ENCODE measurements at regions of chr9 and their contacts with region 1.

Region 1: GRCh38 chr9:105244003-105244733 is at the start of gene SLC44A1:
- DNase-seq: peak; percentile 96
- H3K4me3 Mint-ChIP-seq: peak within 1 kb of the TSS; percentile 83
- H3K27ac Mint-ChIP-seq: peak within 1 kb of the TSS; percentile 79
- H3K4me1 Mint-ChIP-seq: peaks cover 6% of the 10 kb centered on the region
- H3K27me3 Mint-ChIP-seq: peaks cover 27% of the 10 kb centered on the region
- CTCF ChIP-seq: no peak
- total RNA-seq, gene SLC44A1: 15.2 and 15.9 TPM in 2 replicates

Region 2: DNA sequence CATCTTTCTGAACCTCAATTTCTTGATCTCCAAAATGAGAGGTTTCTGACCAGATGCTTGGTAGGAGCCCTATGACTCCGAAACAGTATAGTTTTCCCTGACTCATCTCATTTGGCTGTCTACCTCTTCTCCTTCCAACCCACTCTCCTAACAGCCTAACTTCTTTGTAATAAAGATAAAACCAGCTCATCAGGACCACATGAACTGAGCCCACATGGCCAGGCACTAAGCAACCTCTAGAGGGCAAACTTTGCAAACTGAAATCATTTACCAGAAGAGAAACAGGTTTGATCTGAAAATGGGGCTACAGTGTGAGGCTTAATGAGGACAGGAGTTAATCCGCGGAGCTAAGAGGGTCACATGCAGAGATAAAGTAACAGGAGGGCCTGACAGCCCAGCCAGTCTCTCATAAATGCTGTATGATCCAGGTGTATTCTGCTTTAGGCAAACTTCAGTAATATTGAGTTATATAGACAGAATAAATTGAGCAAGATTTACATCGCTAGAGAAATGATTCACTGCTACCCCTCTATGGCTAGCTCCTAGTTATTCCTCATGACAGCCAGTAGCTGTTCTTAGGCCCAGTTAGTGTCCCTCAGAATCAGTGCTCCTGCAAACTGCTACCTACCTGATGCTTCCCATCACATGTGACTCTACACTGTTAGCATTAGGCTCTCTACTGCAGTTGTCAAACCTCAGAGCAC is 380.8 kb before region 1 on chr9:
- CTCF ChIA-PET with region 1: interaction called, 7 read pairs
- POLR2A ChIA-PET with region 1: interaction called, 5 read pairs
- intact Hi-C with region 1: loop called (anchors 10 kb)
- DNase-seq: peak; percentile 83
- H3K4me3 Mint-ChIP-seq: no peak overlapping the region
- H3K27ac Mint-ChIP-seq: no peak overlapping the region
- H3K4me1 Mint-ChIP-seq: peaks cover 11% of the 10 kb centered on the region
- H3K27me3 Mint-ChIP-seq: no peaks in the 10 kb centered on the region
- CTCF ChIP-seq: peak; percentile 74

Region 3: DNA sequence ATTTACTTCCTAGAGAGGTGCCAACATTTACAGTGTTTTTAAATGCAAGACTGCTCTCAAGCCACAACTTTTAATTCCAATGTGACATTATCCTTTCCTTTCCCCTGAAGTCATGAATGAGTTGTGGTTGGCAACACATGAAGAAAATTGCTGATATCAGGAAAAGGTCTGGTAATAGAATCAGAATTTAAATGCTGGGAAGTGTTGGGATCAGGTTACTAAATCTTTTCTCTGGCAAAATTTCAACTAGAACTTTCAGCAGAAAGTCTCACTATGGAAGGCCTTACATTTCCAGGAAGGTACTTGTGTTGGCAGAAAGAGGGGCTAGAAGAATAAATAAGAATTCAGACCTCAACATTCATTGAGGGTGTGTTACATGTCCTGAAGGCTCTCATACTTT is 10.3 kb before region 1 on chr9:
- CTCF ChIA-PET with region 1: interaction called, 10 read pairs
- POLR2A ChIA-PET with region 1: interaction called, 3 read pairs
- intact Hi-C with region 1: no loop called
- DNase-seq: peak; percentile 43
- H3K4me3 Mint-ChIP-seq: no peak overlapping the region
- H3K27ac Mint-ChIP-seq: no peak overlapping the region
- H3K4me1 Mint-ChIP-seq: peaks cover 5% of the 10 kb centered on the region
- H3K27me3 Mint-ChIP-seq: peaks cover 4% of the 10 kb centered on the region
- CTCF ChIP-seq: no peak

Region 4: GRCh38 chr9:105280691-105281090 is 36.5 kb after region 1 on chr9:
- CTCF ChIA-PET with region 1: interaction called, 8 read pairs
- POLR2A ChIA-PET with region 1: interaction called, 19 read pairs
- intact Hi-C with region 1: no loop called
- DNase-seq: peak; percentile 36
- H3K4me3 Mint-ChIP-seq: no peak overlapping the region
- H3K27ac Mint-ChIP-seq: peak overlapping the region; percentile 33
- H3K4me1 Mint-ChIP-seq: peaks cover 20% of the 10 kb centered on the region
- H3K27me3 Mint-ChIP-seq: no peaks in the 10 kb centered on the region
- CTCF ChIP-seq: no peak

Region 5: DNA sequence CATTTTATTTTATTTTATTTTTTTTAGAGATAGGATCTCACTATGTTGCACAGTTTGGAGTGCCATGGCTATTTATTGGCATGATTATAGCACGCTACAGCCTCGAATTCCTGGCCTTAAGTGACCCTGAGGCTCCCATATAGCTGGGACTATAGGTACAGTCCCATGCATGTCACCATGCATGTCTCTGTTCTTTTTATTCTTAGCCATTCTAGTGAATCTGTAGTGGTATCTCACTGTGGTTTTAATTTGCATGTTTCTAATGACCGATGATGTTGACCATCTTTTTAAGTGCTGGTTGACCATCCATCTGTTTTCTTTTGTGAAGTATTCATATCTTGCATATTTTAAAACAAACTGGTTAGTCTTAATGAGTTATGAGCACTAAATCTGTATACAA is 76.4 kb after region 1 on chr9:
- CTCF ChIA-PET with region 1: no interaction called
- POLR2A ChIA-PET with region 1: no interaction called
- intact Hi-C with region 1: no loop called
- DNase-seq: no peak
- H3K4me3 Mint-ChIP-seq: no peak overlapping the region
- H3K27ac Mint-ChIP-seq: no peak overlapping the region
- H3K4me1 Mint-ChIP-seq: no peaks in the 10 kb centered on the region
- H3K27me3 Mint-ChIP-seq: no peaks in the 10 kb centered on the region
- CTCF ChIP-seq: no peak

Region 6: DNA sequence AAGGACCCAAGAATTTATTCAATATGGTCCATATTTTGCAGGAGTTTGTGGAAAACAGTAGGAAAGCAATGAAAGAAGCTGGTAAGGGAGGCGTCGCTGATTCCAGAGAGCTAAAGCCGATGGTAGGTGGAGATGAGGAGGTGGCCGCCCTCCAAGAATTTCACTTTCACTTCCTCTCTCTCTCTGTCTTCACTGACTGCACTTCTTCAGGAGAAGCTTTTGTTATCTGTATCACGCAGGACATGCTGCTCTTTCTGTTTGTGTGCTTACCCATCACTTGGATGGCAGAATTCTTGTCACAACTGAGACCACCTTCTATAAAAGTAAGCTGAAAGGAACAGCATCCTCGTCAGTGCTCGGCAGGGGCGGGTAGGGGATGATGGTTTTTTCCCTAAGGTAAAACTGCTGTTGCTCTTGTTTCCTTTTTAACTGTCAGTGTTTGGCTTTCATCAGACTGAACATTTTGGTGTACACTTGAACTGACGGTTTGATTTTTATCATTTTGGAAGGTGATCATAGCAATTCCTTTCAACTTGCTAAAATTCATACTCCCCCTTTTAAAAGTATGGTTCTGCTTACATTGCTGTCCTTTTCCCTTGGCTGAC is 141.3 kb after region 1 on chr9:
- CTCF ChIA-PET with region 1: interaction called, 8 read pairs
- POLR2A ChIA-PET with region 1: no interaction called
- intact Hi-C with region 1: loop called (anchors 10 kb)
- DNase-seq: peak; percentile 36
- H3K4me3 Mint-ChIP-seq: peak overlapping the region; percentile 70
- H3K27ac Mint-ChIP-seq: peak overlapping the region; percentile 53
- H3K4me1 Mint-ChIP-seq: peaks cover 7% of the 10 kb centered on the region
- H3K27me3 Mint-ChIP-seq: no peaks in the 10 kb centered on the region
- CTCF ChIP-seq: no peak

Region 7: DNA sequence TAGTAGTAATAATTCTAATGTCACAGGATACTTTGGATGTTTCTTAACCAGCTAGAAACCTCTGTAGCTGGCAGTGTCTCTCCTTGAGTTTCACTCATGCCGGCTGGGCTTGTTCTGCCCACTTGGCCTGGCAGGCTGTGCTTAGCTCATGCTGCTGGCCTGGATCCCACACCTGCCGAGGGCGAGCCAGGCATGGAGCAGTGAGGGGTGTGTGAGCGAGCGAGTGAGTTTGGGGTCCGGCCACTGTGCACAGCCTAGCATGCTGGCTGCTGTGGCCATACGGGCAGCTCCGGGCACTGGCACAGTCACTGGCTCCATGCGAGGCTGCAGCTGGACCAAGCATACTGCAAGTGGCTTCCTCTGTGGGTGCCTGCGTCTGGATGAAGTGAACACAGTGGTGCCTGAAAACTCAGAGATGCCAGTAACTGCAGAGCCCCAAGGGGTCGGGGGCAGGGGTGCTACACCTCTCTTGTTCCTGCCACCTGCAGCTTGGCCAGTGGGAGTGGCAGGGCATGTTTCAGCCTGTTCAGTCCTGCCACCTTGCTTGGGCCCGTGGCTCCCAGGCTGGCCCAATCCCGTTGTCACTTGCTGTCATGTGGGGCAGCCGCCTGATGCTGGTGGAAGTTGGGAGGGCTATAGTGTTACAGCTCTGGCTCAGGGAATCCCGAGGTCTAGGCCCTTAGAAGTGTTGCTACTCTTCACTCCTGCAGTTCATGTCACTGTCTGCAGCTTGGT is 213.6 kb after region 1 on chr9:
- CTCF ChIA-PET with region 1: no interaction called
- POLR2A ChIA-PET with region 1: no interaction called
- intact Hi-C with region 1: no loop called
- DNase-seq: no peak
- H3K4me3 Mint-ChIP-seq: no peak overlapping the region
- H3K27ac Mint-ChIP-seq: no peak overlapping the region
- H3K4me1 Mint-ChIP-seq: no peaks in the 10 kb centered on the region
- H3K27me3 Mint-ChIP-seq: no peaks in the 10 kb centered on the region
- CTCF ChIP-seq: no peak

Measured in MCF 10A (cell line).